ENCODE measurements at regions of chr18 and their contacts with region 1.

Region 1: DNA sequence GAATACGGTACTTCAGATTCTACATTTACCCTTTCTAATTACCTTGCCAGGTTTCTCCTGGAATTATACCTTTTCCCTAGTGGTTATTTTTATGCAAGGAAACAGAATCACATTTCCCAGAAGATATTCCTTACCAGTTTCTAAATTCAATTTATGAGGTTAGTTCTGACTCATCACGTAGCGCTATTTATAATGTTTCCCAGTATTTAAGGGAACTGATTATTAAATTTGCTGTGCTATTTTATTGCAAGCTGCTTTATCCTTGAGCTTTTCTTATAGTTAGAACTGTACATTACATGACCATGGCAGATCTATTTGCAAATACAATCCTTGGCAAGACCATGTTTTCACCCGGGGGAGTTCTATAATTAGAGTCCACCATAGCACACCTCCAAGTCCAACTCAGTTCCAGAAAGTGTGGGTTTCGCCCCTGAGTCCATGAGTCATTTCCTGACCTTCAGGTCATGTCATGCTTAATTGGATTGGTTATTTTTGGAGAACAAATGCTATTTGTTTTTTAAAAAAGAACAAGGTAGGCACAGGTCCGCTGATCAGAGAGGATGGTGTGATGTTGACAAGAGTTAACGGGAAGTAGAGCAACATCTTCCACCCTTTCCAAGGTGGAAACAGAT is 126.6 kb downstream of the ZNF532 start:
- DNase-seq: no peak

Region 2: GRCh38 chr18:58847383-58848071 is 143.8 kb before region 1 on chr18:
- intact Hi-C with region 1: loop called (anchors 5 kb)
- DNase-seq: no peak

Region 3: DNA sequence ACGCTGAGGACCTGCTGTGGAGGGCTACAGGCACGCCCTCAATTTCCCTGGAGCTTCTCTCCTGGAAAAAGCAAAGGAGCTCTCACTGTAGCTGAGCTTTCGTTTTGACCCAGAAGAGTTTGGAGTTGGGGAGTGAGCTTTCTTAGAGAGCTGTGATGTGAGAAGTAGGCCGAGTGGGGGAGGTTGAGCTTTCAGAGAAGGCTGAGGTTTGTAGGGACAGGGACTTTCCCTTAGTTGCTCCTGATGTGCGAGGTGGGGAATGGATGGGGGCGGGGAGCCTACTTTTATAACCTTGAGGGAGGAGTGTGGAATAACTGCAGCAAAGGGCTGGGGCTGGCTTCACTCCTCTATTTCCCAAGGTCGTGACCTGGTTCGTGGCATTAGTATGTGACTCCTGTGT is 79.5 kb before region 1 on chr18:
- intact Hi-C with region 1: loop called (anchors 5 kb)
- DNase-seq: no peak

Region 4: GRCh38 chr18:59056706-59057492 is 65.6 kb after region 1 on chr18:
- intact Hi-C with region 1: loop called (anchors 5 kb)
- DNase-seq: peak; percentile 82

Measured in cardiac septum (tissue), 1 donor.